BJ (cell line): ENCODE measurements at regions of chr2 and their contacts with region 1.

Region 1: DNA sequence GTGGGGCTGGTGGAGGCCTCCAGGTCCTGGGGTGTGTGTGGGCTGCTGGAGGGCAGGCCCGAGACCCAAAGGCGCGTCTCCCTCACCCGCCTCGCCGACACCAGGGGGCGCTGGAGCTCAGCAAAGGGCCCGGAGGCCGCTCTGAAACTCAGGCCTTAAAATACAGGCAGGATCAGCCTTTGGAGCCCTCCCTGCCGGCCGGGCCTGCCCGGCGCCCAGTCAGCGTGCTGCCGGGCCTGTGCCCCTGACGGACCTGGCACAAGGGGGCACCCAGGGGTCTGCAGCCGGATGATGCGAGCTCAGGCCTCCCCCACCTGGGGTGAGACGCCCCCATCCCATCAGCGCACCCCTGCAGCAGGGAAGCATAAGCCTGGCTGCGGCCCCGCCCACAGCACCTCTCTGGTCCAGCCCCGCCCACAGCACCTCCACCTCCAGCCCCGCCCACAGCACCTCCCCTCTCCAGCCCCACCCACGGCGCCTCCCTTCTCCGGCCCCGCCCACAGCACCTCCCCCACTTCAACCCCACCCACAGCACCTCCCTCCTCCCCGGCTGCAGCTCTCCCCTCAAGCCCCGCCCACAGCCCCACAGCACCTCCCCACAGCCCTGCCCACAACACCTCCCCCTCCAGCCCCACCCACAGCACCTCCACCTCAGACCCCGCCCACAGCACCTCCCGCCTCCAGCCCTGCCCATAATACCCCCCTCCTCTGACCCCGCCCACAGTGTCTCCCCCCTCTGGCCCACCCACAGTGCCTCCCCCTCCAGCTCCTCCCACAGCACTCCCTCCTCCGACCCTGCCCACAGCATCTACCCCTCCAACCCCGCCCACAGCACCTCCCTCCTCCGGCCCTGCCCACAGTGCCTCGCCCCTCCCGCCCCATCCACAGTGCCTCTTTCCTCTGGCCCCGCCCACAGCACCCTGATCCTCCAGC is 92.8 kb upstream of the OTOS start:
- DNase-seq: no peak
- H3K4me3 ChIP-seq: peak overlapping the region; percentile 41
- H3K27me3 ChIP-seq: no peaks in the 10 kb centered on the region
- CTCF ChIP-seq: peak; percentile 92

Region 2: DNA sequence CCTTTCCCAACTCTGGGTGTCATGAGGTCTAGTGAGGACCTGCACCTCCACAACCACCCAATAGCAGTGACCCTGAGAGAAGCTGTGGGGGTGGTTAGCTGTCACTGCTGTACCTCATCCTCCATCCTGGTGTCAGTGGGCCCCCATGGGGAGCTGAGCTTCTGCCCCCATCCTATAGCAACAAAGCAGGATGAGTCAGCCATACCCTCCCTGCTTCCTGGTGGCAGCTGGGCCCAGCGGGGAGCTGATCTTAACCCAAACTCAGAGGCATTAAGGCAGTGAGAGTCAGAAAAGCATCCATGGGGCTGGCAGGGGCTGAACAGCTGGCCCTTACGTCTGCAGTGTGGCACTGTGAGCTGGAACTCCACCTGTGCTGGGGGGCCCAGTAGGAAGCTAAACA is 584.6 kb before region 1 on chr2:
- CTCF ChIA-PET with region 1: no interaction called
- POLR2A ChIA-PET with region 1: no interaction called
- DNase-seq: no peak
- H3K4me3 ChIP-seq: no peak overlapping the region
- H3K27me3 ChIP-seq: no peaks in the 10 kb centered on the region
- CTCF ChIP-seq: no peak

Region 3: GRCh38 chr2:240213476-240214421 is 19.5 kb before region 1 on chr2:
- CTCF ChIA-PET with region 1: interaction called, 11 read pairs
- POLR2A ChIA-PET with region 1: no interaction called
- DNase-seq: no peak
- H3K4me3 ChIP-seq: no peak overlapping the region
- H3K27me3 ChIP-seq: no peaks in the 10 kb centered on the region; the same call in 1 of the 2 replicates
- CTCF ChIP-seq: no peak

Region 4: GRCh38 chr2:240220371-240220770 is 12.9 kb before region 1 on chr2:
- CTCF ChIA-PET with region 1: interaction called, 14 read pairs
- POLR2A ChIA-PET with region 1: no interaction called
- DNase-seq: no peak
- H3K4me3 ChIP-seq: no peak overlapping the region
- H3K27me3 ChIP-seq: peaks cover 1% of the 10 kb centered on the region
- CTCF ChIP-seq: no peak

Region 5: GRCh38 chr2:240344903-240345302 is 111.7 kb after region 1 on chr2:
- CTCF ChIA-PET with region 1: interaction called, 24 read pairs
- POLR2A ChIA-PET with region 1: no interaction called
- DNase-seq: no peak
- H3K4me3 ChIP-seq: no peak overlapping the region
- H3K27me3 ChIP-seq: no peaks in the 10 kb centered on the region; the same call in 1 of the 2 replicates
- CTCF ChIP-seq: peak; percentile 10; the same call in 1 of the 2 replicates

Region 6: GRCh38 chr2:240434728-240435456 is 201.7 kb after region 1 on chr2:
- CTCF ChIA-PET with region 1: interaction called, 50 read pairs
- POLR2A ChIA-PET with region 1: interaction called, 4 read pairs
- DNase-seq: peak; percentile 26
- H3K4me3 ChIP-seq: peak overlapping the region; percentile 70
- H3K27me3 ChIP-seq: no peaks in the 10 kb centered on the region
- CTCF ChIP-seq: no peak

Region 7: DNA sequence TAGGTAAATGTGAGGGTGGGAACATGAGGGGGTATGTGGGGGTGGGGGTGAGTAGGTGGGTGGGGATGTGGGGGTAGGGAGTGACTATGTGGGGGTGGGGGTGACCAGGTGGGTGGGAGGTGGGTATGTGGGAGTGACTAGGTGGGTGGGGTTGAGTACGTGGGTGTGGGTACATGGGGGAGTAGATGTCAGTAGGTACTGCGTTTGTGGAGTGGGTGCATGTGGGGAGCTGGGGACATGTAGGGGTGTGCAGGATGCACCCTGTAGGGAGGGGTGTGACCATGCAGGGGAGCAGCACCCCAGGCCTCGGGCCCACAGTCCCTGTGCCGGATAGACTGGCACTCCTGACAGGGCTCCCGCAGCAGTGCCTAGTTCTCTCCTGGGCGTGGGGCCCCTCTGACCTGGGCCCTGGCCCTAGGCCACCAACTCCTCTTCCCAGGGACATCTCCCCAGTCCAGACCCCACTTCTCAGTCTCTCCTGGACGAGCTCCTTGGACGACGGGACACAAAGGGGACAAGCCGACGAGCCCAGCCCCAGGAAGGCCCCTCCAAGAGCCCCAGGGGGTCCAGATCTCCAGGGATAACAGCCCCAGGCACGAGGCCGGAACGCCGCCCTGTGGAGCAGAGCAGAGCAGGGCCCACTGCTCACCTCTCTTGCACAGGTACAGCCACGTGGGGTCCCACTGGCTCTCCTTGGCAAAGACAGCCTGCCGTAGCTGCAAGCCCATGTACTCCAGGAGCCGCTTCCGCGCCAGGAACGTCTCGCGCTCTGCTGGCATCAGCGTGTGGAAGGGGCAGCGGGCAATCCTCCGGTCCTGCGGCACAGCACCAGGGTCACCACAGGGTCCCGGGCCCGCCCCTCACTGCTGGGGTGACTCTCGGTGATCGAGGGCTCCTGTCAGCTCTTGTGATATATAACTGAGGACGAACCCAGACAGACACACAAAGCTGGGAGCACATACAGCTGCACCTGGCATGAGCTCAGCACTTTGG is 266.4 kb after region 1 on chr2:
- CTCF ChIA-PET with region 1: interaction called, 29 read pairs
- POLR2A ChIA-PET with region 1: no interaction called
- DNase-seq: no peak
- H3K4me3 ChIP-seq: no peak overlapping the region
- H3K27me3 ChIP-seq: no peaks in the 10 kb centered on the region
- CTCF ChIP-seq: no peak